ENCODE measurements at regions of chr1 and their contacts with region 1.

Region 1: GRCh38 chr1:16146279-16147155 is 9.4 kb downstream of the EPHA2 start:
- DNase-seq: peak; percentile 91 to 92
- H3K4me3 ChIP-seq: no peak overlapping the region
- H3K4me3 Mint-ChIP-seq: peak overlapping the region; percentile 72
- H3K27ac Mint-ChIP-seq: peak overlapping the region; percentile 96
- H3K4me1 ChIP-seq: peaks cover 75% of the 10 kb centered on the region
- H3K4me1 Mint-ChIP-seq: peaks cover 31% of the 10 kb centered on the region
- H3K27me3 ChIP-seq: no peaks in the 10 kb centered on the region
- H3K27me3 Mint-ChIP-seq: no peaks in the 10 kb centered on the region
- CTCF ChIP-seq: no peak

Region 2: GRCh38 chr1:16181887-16182719 is 35.6 kb after region 1 on chr1:
- CTCF ChIA-PET with region 1: no interaction called
- POLR2A ChIA-PET with region 1: interaction called, 12 read pairs
- intact Hi-C with region 1: loop called (anchors 2 kb)
- DNase-seq: peak; percentile 82 to 86
- H3K4me3 ChIP-seq: no peak overlapping the region
- H3K4me3 Mint-ChIP-seq: peak overlapping the region; percentile 40
- H3K27ac Mint-ChIP-seq: peak overlapping the region; percentile 89
- H3K4me1 ChIP-seq: peaks cover 47% of the 10 kb centered on the region
- H3K4me1 Mint-ChIP-seq: peaks cover 31% of the 10 kb centered on the region
- H3K27me3 ChIP-seq: no peaks in the 10 kb centered on the region
- H3K27me3 Mint-ChIP-seq: no peaks in the 10 kb centered on the region
- CTCF ChIP-seq: no peak

Measured in Caco-2 (cell line).